Gastrocnemius medialis (tissue), 4 donors: ENCODE measurements at regions of chr10 and their contacts with region 1.

Region 1: GRCh38 chr10:102927311-102928010 is 9.4 kb downstream of the CNNM2 start:
- DNase-seq: no peak
- ATAC-seq: no peak
- H3K4me3 ChIP-seq: no peak overlapping the region
- H3K27ac ChIP-seq: no peak overlapping the region
- H3K4me1 ChIP-seq: no peaks in the 10 kb centered on the region
- H3K27me3 ChIP-seq: no peaks in the 10 kb centered on the region
- CTCF ChIP-seq: no peak
- POLR2A ChIP-seq: no peak

Region 2: GRCh38 chr10:101485681-101486554 is 1441.5 kb before region 1 on chr10:
- in situ Hi-C with region 1: no loop called
- intact Hi-C with region 1: no loop called
- DNase-seq: peak; percentile 2 to 36
- ATAC-seq: peak; percentile 71 to 89
- H3K4me3 ChIP-seq: peak overlapping the region; percentile 36 to 55 (median 46)
- H3K27ac ChIP-seq: peak overlapping the region; percentile 53 to 74 (median 64)
- H3K4me1 ChIP-seq: peaks cover 38 to 42% of the 10 kb centered on the region in 2 donors
- H3K27me3 ChIP-seq: no peaks in the 10 kb centered on the region
- CTCF ChIP-seq: no peak
- POLR2A ChIP-seq: no peak

Region 3: DNA sequence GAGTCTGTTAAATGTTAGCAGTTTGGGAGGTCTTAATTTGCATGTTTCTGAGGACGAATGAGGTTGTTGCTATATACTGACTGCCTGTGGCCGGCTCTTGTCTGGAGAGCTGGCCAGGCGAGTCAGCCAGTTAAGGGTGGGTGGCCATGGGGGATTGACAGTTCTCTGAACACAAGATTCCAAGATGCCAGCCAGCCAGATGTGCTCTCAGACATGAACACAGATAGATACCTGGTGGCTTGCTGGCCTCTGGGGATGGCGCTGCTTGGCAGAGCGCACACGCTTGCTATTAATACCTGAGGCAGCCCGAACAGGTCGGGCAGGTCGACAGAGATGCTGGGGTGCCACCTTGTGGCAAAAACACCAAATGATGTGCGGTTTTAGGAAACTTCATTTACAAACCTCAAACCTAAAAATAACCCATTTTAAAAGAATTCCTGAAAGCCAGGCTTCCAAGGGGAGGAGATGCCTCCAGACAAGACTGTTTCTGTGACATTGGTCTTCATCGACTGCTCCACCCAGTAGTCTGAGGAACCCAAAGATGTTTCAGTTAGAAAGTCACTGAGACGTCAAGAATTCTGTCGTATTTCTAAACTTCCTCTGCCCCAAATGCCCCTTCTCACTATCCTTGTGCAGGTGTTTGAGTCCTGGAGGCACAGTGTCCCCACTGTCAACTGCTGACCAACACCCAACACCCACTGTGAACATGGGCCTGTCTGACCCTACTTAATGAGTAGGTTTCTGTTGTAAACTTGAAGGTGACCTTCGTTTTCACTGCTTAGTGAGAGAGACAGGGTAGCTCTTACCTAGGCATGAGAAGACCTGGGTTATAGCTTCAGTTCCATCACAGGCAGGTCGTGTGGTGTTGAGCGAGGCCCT is 142.2 kb after region 1 on chr10:
- in situ Hi-C with region 1: loop called in 2 of 4 experiments (anchors 5 to 10 kb)
- intact Hi-C with region 1: no loop called
- DNase-seq: peak in 1 of 2 donors; percentile 49
- ATAC-seq: peak in 1 of 2 donors; percentile 66
- H3K4me3 ChIP-seq: no peak overlapping the region
- H3K27ac ChIP-seq: no peak overlapping the region
- H3K4me1 ChIP-seq: no peaks in the 10 kb centered on the region
- H3K27me3 ChIP-seq: no peaks in the 10 kb centered on the region
- CTCF ChIP-seq: peak; percentile 11 to 66 (median 58)
- POLR2A ChIP-seq: no peak